IMR-90 (cell line): ENCODE measurements at regions of chr15 and their contacts with region 1.

Region 1: GRCh38 chr15:32717426-32718226 is at the start of gene GREM1:
- DNase-seq: peak; percentile 70
- ATAC-seq: peak; percentile 72
- H3K4me3 ChIP-seq: peak within 1 kb of the TSS; percentile 84
- H3K27ac ChIP-seq: peak within 1 kb of the TSS; percentile 94
- H3K4me1 ChIP-seq: peaks cover 5% of the 10 kb centered on the region
- H3K27me3 ChIP-seq: no peaks in the 10 kb centered on the region
- CTCF ChIP-seq: no peak
- POLR2A ChIP-seq: peak; percentile 98
- RAD21 ChIP-seq: no peak
- total RNA-seq, gene GREM1: 848 and 1,032 TPM in 2 replicates

Region 2: DNA sequence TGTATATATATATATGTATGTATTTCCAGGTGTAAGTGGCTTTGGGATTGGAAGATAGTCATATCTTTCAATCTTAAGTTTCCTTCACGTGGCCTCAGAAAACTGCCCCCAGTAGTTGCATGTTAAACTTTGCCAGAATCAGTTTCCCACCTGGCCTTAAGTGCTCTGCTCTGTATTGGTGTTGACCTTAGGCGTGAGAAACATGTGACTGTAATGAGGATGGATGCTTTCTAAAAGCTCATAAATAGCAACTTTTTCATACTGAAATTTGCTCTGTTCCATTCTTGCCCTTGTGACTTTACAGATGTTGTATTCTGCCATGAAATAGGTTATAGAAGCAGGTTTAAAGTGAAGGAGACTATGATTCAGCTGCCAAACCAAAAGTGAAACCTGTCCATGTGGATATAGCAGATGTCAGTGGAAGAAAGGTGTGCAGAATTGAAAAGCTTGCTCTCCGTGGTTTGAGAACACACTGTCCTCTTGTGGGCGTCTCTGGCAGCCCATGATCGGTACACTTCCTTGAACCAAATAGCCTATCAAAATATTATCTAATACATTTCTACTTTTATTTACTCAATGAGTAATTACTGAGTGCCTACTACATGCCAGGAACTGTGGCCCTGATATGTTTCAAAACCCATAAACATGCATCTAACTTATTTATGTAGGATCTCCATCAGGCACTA is 60.3 kb before region 1 on chr15:
- CTCF ChIA-PET with region 1: no interaction called
- POLR2A ChIA-PET with region 1: no interaction called
- dilution Hi-C with region 1: no loop called
- in situ Hi-C with region 1: loop called (anchors 10 kb)
- intact Hi-C with region 1: loop called (anchors 1 kb)
- DNase-seq: no peak
- ATAC-seq: no peak
- H3K4me3 ChIP-seq: no peak overlapping the region
- H3K27ac ChIP-seq: no peak overlapping the region
- H3K4me1 ChIP-seq: peaks cover 3% of the 10 kb centered on the region
- H3K27me3 ChIP-seq: no peaks in the 10 kb centered on the region
- CTCF ChIP-seq: no peak
- POLR2A ChIP-seq: no peak
- RAD21 ChIP-seq: no peak

Region 3: GRCh38 chr15:32664796-32665195 is 52.8 kb before region 1 on chr15:
- CTCF ChIA-PET with region 1: no interaction called
- POLR2A ChIA-PET with region 1: no interaction called
- dilution Hi-C with region 1: no loop called
- in situ Hi-C with region 1: loop called (anchors 10 kb)
- intact Hi-C with region 1: loop called (anchors 1 kb)
- DNase-seq: no peak
- ATAC-seq: no peak
- H3K4me3 ChIP-seq: no peak overlapping the region
- H3K27ac ChIP-seq: no peak overlapping the region
- H3K4me1 ChIP-seq: peaks cover 11% of the 10 kb centered on the region
- H3K27me3 ChIP-seq: no peaks in the 10 kb centered on the region
- CTCF ChIP-seq: no peak
- POLR2A ChIP-seq: no peak
- RAD21 ChIP-seq: no peak

Region 4: DNA sequence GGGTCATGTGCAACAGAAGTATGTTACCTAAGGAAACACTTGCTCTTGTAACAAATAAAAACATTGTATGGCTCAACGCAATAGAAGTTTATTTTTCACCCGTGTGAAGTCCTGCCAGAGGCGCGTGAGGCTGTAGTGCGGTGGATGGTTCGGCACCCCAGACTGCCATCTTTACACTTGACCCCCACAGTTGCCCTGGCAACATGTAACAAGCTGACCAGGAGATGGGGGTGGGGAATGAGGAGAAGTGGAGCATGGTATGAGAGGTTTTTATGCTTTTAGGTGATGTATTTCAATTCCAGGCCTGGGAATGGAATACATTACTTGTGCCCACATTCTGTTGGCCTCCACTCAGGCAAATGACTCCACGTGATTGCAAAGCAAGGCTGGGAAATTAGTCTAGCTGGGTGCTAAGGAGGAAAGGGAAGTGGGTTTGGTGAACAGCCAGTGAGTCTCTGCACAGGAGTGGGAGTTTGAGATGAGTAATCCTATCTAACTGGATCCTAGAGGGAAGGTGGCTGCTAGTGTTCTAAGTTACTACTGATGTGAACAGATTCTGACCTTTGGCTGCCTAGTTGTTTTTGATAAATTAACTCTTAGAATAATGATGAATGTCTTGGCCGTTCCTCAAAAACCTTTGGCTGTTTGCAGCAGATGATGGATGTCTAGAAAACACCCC is 33.6 kb before region 1 on chr15:
- CTCF ChIA-PET with region 1: no interaction called
- POLR2A ChIA-PET with region 1: no interaction called
- dilution Hi-C with region 1: no loop called
- in situ Hi-C with region 1: loop called (anchors 5 kb)
- intact Hi-C with region 1: no loop called
- DNase-seq: peak; percentile 95
- ATAC-seq: peak; percentile 65
- H3K4me3 ChIP-seq: no peak overlapping the region
- H3K27ac ChIP-seq: no peak overlapping the region; the same call in 1 of the 2 replicates
- H3K4me1 ChIP-seq: peaks cover 22% of the 10 kb centered on the region
- H3K27me3 ChIP-seq: no peaks in the 10 kb centered on the region
- CTCF ChIP-seq: no peak
- POLR2A ChIP-seq: 0 out of 2 replicates have a peak, but pooled peaks have one; percentile 24
- RAD21 ChIP-seq: no peak

Region 5: GRCh38 chr15:32750979-32751378 is 33.4 kb after region 1 on chr15:
- CTCF ChIA-PET with region 1: no interaction called
- POLR2A ChIA-PET with region 1: no interaction called
- dilution Hi-C with region 1: no loop called
- in situ Hi-C with region 1: no loop called
- intact Hi-C with region 1: no loop called
- DNase-seq: no peak
- ATAC-seq: no peak
- H3K4me3 ChIP-seq: no peak overlapping the region
- H3K27ac ChIP-seq: no peak overlapping the region
- H3K4me1 ChIP-seq: no peaks in the 10 kb centered on the region; the same call in 1 of the 2 replicates
- H3K27me3 ChIP-seq: no peaks in the 10 kb centered on the region
- CTCF ChIP-seq: no peak
- POLR2A ChIP-seq: no peak
- RAD21 ChIP-seq: no peak